ENCODE measurements at regions of chr12 and their contacts with region 1.

Region 1: GRCh38 chr12:31728917-31729640 is at the start of gene AMN1:
- DNase-seq: peak; percentile 100
- H3K4me3 ChIP-seq: peak within 1 kb of the TSS; percentile 78
- H3K4me3 Mint-ChIP-seq: peak within 1 kb of the TSS; percentile 95
- H3K27ac Mint-ChIP-seq: peak within 1 kb of the TSS; percentile 98
- H3K4me1 ChIP-seq: peaks cover 35% of the 10 kb centered on the region
- H3K4me1 Mint-ChIP-seq: peaks cover 21% of the 10 kb centered on the region
- H3K27me3 ChIP-seq: no peaks in the 10 kb centered on the region
- H3K27me3 Mint-ChIP-seq: no peaks in the 10 kb centered on the region
- CTCF ChIP-seq: no peak
- total RNA-seq, gene AMN1: 6.2 and 8.8 TPM in 2 replicates

Region 2: DNA sequence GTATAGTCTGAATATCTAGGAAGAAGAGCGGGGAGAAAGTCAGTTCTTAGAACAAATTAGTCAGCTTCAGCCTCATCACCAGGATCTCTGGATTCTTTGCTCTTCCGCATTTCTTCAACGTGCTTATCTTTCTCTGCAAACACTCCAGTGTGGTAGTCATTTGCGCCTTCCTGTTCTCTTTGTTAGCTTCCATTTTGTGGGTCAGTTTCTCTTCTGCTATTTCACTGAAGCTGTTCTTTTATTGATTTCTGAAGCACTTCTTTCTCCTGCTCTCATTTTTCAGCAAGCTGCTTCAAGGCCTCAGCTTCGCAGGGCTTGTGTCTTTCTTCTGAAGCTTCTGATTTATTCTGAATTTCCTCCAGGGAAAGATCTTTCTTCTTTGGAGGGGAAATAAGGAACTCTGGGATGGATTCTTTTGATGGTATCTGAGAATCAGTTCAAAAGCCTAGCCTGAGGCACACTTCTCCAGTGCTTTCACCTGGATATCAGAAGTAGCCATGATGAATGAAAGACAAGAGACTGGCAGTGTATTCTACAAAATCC is 13.7 kb before region 1 on chr12:
- CTCF ChIA-PET with region 1: interaction called, 3 read pairs
- POLR2A ChIA-PET with region 1: interaction called, 5 read pairs
- intact Hi-C with region 1: loop called (anchors 1 kb)
- DNase-seq: peak; percentile 71
- H3K4me3 ChIP-seq: no peak overlapping the region
- H3K4me3 Mint-ChIP-seq: peak overlapping the region; percentile 60
- H3K27ac Mint-ChIP-seq: peak overlapping the region; percentile 88
- H3K4me1 ChIP-seq: peaks cover 21% of the 10 kb centered on the region
- H3K4me1 Mint-ChIP-seq: peaks cover 29% of the 10 kb centered on the region
- H3K27me3 ChIP-seq: no peaks in the 10 kb centered on the region
- H3K27me3 Mint-ChIP-seq: no peaks in the 10 kb centered on the region
- CTCF ChIP-seq: no peak

Region 3: GRCh38 chr12:31779786-31780495 is 50.9 kb after region 1 on chr12:
- CTCF ChIA-PET with region 1: no interaction called
- POLR2A ChIA-PET with region 1: no interaction called
- intact Hi-C with region 1: no loop called
- DNase-seq: no peak
- H3K4me3 ChIP-seq: no peak overlapping the region
- H3K4me3 Mint-ChIP-seq: no peak overlapping the region
- H3K27ac Mint-ChIP-seq: no peak overlapping the region
- H3K4me1 ChIP-seq: peaks cover 17% of the 10 kb centered on the region
- H3K4me1 Mint-ChIP-seq: peaks cover 7% of the 10 kb centered on the region
- H3K27me3 ChIP-seq: no peaks in the 10 kb centered on the region
- H3K27me3 Mint-ChIP-seq: no peaks in the 10 kb centered on the region
- CTCF ChIP-seq: no peak